ENCODE measurements at regions of chr2 and their contacts with region 1.

Region 1: GRCh38 chr2:234392041-234392615 is 104.8 kb downstream of the ARL4C start:
- DNase-seq: no peak
- ATAC-seq: no peak
- H3K4me3 ChIP-seq: no peak overlapping the region
- H3K4me3 Mint-ChIP-seq: peak overlapping the region in 9 of 10 donors; percentile 35 to 84 (median 46)
- H3K27ac ChIP-seq: peak overlapping the region; percentile 53
- H3K27ac Mint-ChIP-seq: peak overlapping the region; percentile 17 to 98 (median 94)
- H3K4me1 ChIP-seq: peaks cover 21 to 53% of the 10 kb centered on the region in 2 donors
- H3K4me1 Mint-ChIP-seq: peaks cover 34 to 73% (median 65%) of the 10 kb centered on the region in 7 donors
- H3K27me3 ChIP-seq: no peaks in the 10 kb centered on the region
- H3K27me3 Mint-ChIP-seq: no peaks in the 10 kb centered on the region

Region 2: DNA sequence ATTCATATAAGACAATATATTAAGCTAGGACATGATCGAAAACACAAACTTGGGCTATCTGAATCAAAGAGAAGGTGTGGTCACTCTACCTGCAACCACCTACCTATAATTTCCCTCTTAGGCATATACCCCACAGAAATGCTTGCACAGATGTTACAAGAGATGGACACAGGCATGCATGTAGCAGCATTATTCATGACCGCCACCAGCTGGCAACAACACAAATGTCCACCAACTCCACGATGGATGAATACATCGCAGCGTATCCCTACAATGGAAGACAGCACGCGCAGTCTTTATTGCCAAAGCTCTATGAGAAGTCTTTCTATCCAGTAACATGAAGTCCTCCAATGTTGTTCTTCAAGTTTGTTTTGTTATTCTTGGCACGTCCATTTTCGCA is 14.0 kb after region 1 on chr2:
- CTCF ChIA-PET with region 1: interaction called, 3 read pairs
- POLR2A ChIA-PET with region 1: interaction called, 5 read pairs
- intact Hi-C with region 1: loop called in 1 of 2 experiments (anchors 2 kb)
- DNase-seq: no peak
- ATAC-seq: no peak
- H3K4me3 ChIP-seq: no peak overlapping the region
- H3K4me3 Mint-ChIP-seq: no peak overlapping the region
- H3K27ac ChIP-seq: no peak overlapping the region
- H3K27ac Mint-ChIP-seq: peak overlapping the region in 1 of 9 donors; percentile 55
- H3K4me1 ChIP-seq: peaks cover 6 to 7% of the 10 kb centered on the region in 2 donors
- H3K4me1 Mint-ChIP-seq: peaks cover 16 to 63% (median 57%) of the 10 kb centered on the region in 7 donors
- H3K27me3 ChIP-seq: no peaks in the 10 kb centered on the region
- H3K27me3 Mint-ChIP-seq: no peaks in the 10 kb centered on the region